Right ventricle myocardium superior (tissue), 1 donor: ENCODE measurements at regions of chr1 and their contacts with region 1.

Region 1: GRCh38 chr1:220690140-220691025 is at the start of gene C1orf115:
- DNase-seq: peak; percentile 88
- ATAC-seq: peak; percentile 98
- total RNA-seq, gene C1orf115: 21.0 TPM

Region 2: GRCh38 chr1:220733090-220733601 is 42.8 kb after region 1 on chr1:
- intact Hi-C with region 1: loop called (anchors 2 kb)
- DNase-seq: peak; percentile 77
- ATAC-seq: peak; percentile 97